ENCODE measurements at regions of chr14 and their contacts with region 1.

Region 1: GRCh38 chr14:105689728-105690127 is 163.3 kb downstream of the TMEM121 start:
- DNase-seq: no peak
- ATAC-seq: no peak
- H3K4me3 Mint-ChIP-seq: no peak overlapping the region
- H3K27ac Mint-ChIP-seq: no peak overlapping the region
- H3K4me1 Mint-ChIP-seq: peaks cover 2% of the 10 kb centered on the region
- H3K27me3 Mint-ChIP-seq: peaks cover 9% of the 10 kb centered on the region
- CTCF ChIP-seq: no peak

Region 2: GRCh38 chr14:105568859-105569708 is 120.6 kb before region 1 on chr14:
- CTCF ChIA-PET with region 1: no interaction called
- POLR2A ChIA-PET with region 1: no interaction called
- intact Hi-C with region 1: loop called (anchors 5 kb)
- DNase-seq: no peak
- ATAC-seq: no peak
- H3K4me3 Mint-ChIP-seq: no peak overlapping the region
- H3K27ac Mint-ChIP-seq: no peak overlapping the region
- H3K4me1 Mint-ChIP-seq: no peaks in the 10 kb centered on the region
- H3K27me3 Mint-ChIP-seq: no peaks in the 10 kb centered on the region
- CTCF ChIP-seq: no peak

Region 3: DNA sequence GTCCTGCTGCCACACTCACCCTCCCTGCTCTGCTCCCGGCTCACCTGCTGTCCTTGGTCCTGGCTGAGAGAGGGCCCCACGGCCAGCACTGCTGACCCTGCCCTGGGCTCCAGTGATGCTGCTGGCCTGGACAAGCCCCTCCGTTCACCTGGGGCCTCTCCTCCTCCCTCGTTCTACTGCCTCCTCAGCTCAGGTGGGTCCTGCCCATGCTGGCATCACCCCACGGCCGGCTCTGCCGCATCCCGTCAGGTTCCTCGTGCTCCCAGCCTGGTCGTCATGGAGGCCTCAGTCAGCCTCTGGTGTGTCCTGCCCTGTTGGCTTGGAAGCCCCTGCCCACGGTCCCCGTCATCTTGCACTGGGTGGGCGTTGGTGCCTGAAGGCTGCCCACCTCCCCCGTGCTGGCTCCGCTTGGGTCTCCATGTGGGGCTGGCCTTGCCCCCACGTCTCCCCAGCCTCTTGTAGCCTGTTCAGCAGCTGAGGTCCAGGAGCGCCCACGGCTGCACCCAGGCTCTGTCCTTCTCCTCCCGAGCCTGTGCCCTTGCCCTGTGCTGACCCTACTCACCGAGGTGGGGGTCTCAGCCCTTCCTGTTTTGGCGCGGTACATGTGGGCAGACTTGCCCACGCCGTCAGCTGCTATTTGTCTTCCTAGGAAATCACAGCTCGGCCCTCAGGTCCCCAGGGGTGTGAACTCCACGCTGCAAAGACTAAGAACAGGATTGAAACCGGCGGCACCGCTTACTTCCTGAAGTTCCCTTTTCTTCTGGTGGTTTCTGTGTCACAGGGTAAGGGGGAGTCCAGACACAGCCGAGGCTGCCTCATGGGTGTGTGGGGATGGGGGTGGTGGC is 41.7 kb before region 1 on chr14:
- CTCF ChIA-PET with region 1: no interaction called
- POLR2A ChIA-PET with region 1: no interaction called
- intact Hi-C with region 1: no loop called
- DNase-seq: no peak
- ATAC-seq: no peak
- H3K4me3 Mint-ChIP-seq: no peak overlapping the region
- H3K27ac Mint-ChIP-seq: no peak overlapping the region
- H3K4me1 Mint-ChIP-seq: peaks cover 4% of the 10 kb centered on the region
- H3K27me3 Mint-ChIP-seq: peaks cover 1% of the 10 kb centered on the region
- CTCF ChIP-seq: no peak

Region 4: GRCh38 chr14:105664676-105665075 is 25.1 kb before region 1 on chr14:
- CTCF ChIA-PET with region 1: no interaction called
- POLR2A ChIA-PET with region 1: no interaction called
- intact Hi-C with region 1: no loop called
- DNase-seq: no peak
- ATAC-seq: no peak
- H3K4me3 Mint-ChIP-seq: no peak overlapping the region
- H3K27ac Mint-ChIP-seq: no peak overlapping the region
- H3K4me1 Mint-ChIP-seq: no peaks in the 10 kb centered on the region
- H3K27me3 Mint-ChIP-seq: peaks cover 3% of the 10 kb centered on the region
- CTCF ChIP-seq: no peak

Measured in activated CD8-positive, alpha-beta T cell treated with anti-CD3 and anti-CD28 coated beads for 36 hours (primary cell).